MCF 10A (cell line): ENCODE measurements at regions of chr11 and their contacts with region 1.

Region 1: GRCh38 chr11:65773784-65774411 is 6.9 kb downstream of the AP5B1 start:
- DNase-seq: no peak
- H3K4me3 Mint-ChIP-seq: no peak overlapping the region
- H3K27ac Mint-ChIP-seq: no peak overlapping the region
- H3K4me1 Mint-ChIP-seq: peaks cover 18% of the 10 kb centered on the region
- H3K27me3 Mint-ChIP-seq: no peaks in the 10 kb centered on the region
- CTCF ChIP-seq: no peak

Region 2: GRCh38 chr11:65625628-65626342 is 148.1 kb before region 1 on chr11:
- CTCF ChIA-PET with region 1: no interaction called
- POLR2A ChIA-PET with region 1: no interaction called
- intact Hi-C with region 1: no loop called
- DNase-seq: no peak
- H3K4me3 Mint-ChIP-seq: no peak overlapping the region
- H3K27ac Mint-ChIP-seq: no peak overlapping the region
- H3K4me1 Mint-ChIP-seq: no peaks in the 10 kb centered on the region
- H3K27me3 Mint-ChIP-seq: no peaks in the 10 kb centered on the region
- CTCF ChIP-seq: no peak

Region 3: DNA sequence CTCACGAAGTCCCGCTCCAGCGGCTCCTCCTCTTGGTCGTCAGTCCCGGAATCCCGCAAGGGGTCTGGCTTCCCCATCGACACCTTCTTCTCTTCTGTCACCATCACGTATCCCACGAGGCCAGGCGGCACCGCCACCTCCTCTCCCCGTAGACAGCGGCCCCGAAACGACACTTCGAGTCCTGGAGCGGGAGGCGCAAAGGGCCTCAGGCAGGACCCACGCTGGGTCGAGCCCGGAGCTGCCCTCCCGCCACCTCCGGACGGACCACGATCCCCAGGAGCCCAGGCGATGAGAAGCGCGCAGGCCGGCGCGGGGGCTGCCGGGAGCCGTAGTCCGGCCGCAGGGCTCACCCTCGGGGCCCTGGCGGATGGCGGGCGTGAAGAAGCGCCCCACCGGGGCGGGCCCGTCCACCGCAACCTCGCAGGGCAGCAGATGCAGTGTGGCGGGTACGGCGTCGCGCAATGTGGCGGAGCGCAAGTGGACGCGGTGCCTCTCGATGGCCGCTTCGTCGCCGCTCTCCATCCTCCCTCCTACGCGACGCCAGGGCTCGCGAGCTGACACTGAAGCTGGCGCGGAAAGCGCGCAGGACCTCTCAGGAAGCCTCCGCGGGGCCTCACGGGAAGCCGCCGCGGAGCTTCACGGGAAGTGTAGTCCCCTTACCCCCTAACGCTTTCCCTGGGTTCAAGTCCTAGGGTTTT is 53.5 kb before region 1 on chr11 and contains the start of gene RNASEH2C:
- CTCF ChIA-PET with region 1: interaction called, 16 read pairs
- POLR2A ChIA-PET with region 1: interaction called, 27 read pairs
- intact Hi-C with region 1: loop called (anchors 1 kb)
- DNase-seq: peak; percentile 86
- H3K4me3 Mint-ChIP-seq: peak within 1 kb of the TSS; percentile 97
- H3K27ac Mint-ChIP-seq: peak within 1 kb of the TSS; percentile 75
- H3K4me1 Mint-ChIP-seq: peaks cover 10% of the 10 kb centered on the region
- H3K27me3 Mint-ChIP-seq: no peaks in the 10 kb centered on the region
- CTCF ChIP-seq: no peak
- total RNA-seq, gene RNASEH2C: 27.4 and 35.7 TPM in 2 replicates

Region 4: DNA sequence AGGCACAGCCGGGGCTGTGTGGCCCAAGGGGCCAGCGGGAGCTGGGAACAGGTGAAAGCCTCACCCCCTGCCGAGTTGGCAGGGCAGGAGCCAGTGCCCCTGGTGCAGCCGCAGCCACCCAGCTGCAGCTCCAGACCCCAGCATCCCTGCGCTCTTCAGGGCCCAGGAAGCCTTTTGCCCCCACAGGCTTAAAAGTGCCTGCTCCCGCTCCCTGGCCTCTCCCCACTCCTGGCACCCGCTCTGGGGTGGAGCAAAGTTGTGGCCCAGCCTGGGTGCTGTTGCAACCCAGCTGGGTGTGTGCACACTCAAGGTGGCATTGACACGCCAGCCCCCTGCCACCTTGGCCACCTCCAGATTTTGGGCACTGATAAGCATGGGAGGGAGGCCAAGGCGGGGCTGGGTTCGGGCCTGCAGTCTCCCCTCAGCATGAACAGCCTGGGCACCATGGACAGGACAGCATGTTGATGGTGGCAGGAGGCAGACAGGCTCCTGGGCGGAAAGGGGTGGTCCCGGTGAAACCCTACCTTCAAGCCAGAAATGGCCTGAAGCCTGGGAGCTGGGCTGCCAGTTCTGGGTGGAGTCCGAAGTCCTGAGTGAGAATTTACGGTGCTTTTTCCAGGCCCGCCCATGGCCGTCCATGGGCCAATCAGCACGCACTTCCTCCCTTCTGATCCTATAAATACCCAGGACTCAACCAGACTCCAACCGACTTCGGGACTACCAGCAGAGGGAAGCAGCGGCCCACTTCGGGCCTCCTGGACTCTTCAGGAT is 29.8 kb before region 1 on chr11:
- CTCF ChIA-PET with region 1: interaction called, 16 read pairs
- POLR2A ChIA-PET with region 1: interaction called, 4 read pairs
- intact Hi-C with region 1: no loop called
- DNase-seq: peak; percentile 73
- H3K4me3 Mint-ChIP-seq: no peak overlapping the region
- H3K27ac Mint-ChIP-seq: no peak overlapping the region
- H3K4me1 Mint-ChIP-seq: no peaks in the 10 kb centered on the region
- H3K27me3 Mint-ChIP-seq: peaks cover 38% of the 10 kb centered on the region
- CTCF ChIP-seq: no peak

Region 5: DNA sequence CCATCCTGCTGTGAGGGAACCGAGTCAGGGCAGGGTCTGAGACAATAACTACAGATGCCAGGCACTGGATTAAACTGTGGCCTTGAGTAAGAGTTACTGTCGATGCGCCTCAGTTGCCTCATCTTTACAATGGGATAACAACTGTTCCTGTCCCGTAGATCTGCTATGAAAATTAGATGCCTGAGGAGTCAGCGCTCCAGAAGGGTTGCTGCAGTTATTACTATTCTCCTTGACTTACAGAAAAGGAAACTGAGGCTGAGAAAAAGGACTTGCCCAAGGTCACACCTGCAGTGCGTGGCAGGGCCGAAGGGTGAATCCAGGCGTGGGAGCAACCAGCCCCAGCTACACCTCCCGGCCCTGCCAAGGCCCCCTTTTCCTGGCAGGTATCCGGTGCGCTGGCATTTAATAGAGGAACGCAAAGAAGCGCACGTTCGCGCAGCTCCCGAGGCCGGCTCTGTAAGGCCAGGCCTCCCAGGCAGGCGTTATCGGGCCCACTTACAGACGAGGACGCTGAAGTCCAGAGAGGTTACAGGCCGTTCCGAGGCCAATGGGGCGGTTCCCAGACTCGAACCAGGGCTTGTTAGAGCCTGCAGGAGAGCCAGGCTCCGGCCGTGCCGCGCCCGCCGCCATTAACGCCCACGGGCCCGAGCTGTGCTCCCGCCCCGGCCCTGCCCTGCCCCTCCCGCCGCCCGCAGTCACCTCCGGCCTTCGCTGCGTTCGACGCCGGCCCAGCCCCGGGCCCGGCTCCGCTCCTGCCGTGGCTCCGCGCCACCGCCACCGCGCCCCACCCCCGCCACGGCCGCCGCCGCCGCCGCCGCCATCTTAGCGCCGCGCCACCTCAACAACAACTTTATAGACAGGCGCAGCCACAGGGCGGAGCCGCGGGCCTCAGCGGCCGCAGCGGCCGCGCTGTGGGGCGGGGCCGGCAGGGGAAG is 144.6 kb after region 1 on chr11 and contains the start of gene C11orf68:
- CTCF ChIA-PET with region 1: no interaction called
- POLR2A ChIA-PET with region 1: no interaction called
- intact Hi-C with region 1: no loop called
- DNase-seq: peak; percentile 37
- H3K4me3 Mint-ChIP-seq: peak within 1 kb of the TSS; percentile 89
- H3K27ac Mint-ChIP-seq: peak within 1 kb of the TSS; percentile 81
- H3K4me1 Mint-ChIP-seq: peaks cover 37% of the 10 kb centered on the region
- H3K27me3 Mint-ChIP-seq: no peaks in the 10 kb centered on the region
- CTCF ChIP-seq: no peak
- total RNA-seq, gene C11orf68: 48.0 and 49.4 TPM in 2 replicates